ENCODE measurements at regions of chr2 and their contacts with region 1.

Region 1: GRCh38 chr2:224802407-224802806 is 86.2 kb upstream of the CCDC195 start:
- DNase-seq: no peak
- ATAC-seq: no peak
- H3K4me3 ChIP-seq: no peak overlapping the region
- H3K4me3 Mint-ChIP-seq: no peak overlapping the region
- H3K27ac ChIP-seq: no peak overlapping the region
- H3K27ac Mint-ChIP-seq: peak overlapping the region in 4 of 9 donors; percentile 12 to 79 (median 26)
- H3K4me1 ChIP-seq: no peaks in the 10 kb centered on the region
- H3K4me1 Mint-ChIP-seq: peaks cover 0 to 4% (median 0%) of the 10 kb centered on the region in 7 donors
- H3K27me3 ChIP-seq: no peaks in the 10 kb centered on the region
- H3K27me3 Mint-ChIP-seq: no peaks in the 10 kb centered on the region

Region 2: DNA sequence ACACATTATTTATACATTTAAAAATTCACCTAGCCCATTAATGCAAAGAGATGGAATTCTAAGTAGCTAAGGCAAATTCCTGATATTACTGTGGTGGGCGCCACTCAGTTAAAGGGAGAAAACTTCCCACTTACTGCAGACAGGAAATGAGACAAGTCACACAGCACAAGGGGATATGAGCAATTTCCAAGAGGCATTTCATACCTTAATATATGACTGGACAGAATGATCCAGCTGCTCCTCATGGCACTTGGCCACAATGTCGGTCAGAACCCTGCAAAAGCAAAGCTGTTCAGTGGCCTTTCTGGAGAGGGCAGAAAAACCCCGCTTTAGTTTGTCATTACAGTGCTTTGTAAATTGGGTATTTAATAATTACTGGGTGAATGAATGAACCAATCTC is 35.2 kb after region 1 on chr2:
- CTCF ChIA-PET with region 1: no interaction called
- POLR2A ChIA-PET with region 1: interaction called, 3 read pairs
- intact Hi-C with region 1: loop called (anchors 5 kb)
- DNase-seq: no peak
- ATAC-seq: no peak
- H3K4me3 ChIP-seq: no peak overlapping the region
- H3K4me3 Mint-ChIP-seq: no peak overlapping the region
- H3K27ac ChIP-seq: no peak overlapping the region
- H3K27ac Mint-ChIP-seq: peak overlapping the region in 5 of 9 donors; percentile 45 to 61 (median 51)
- H3K4me1 ChIP-seq: no peaks in the 10 kb centered on the region
- H3K4me1 Mint-ChIP-seq: peaks cover 0 to 13% (median 4%) of the 10 kb centered on the region in 7 donors
- H3K27me3 ChIP-seq: no peaks in the 10 kb centered on the region
- H3K27me3 Mint-ChIP-seq: no peaks in the 10 kb centered on the region

Region 3: GRCh38 chr2:224847961-224848850 is 45.8 kb after region 1 on chr2:
- CTCF ChIA-PET with region 1: no interaction called
- POLR2A ChIA-PET with region 1: no interaction called
- intact Hi-C with region 1: loop called in 1 of 2 experiments (anchors 5 kb)
- DNase-seq: no peak
- ATAC-seq: no peak
- H3K4me3 ChIP-seq: no peak overlapping the region
- H3K4me3 Mint-ChIP-seq: no peak overlapping the region
- H3K27ac ChIP-seq: no peak overlapping the region
- H3K27ac Mint-ChIP-seq: peak overlapping the region in 4 of 9 donors; percentile 25 to 75 (median 62)
- H3K4me1 ChIP-seq: no peaks in the 10 kb centered on the region
- H3K4me1 Mint-ChIP-seq: peaks cover 0 to 14% (median 0%) of the 10 kb centered on the region in 7 donors
- H3K27me3 ChIP-seq: no peaks in the 10 kb centered on the region
- H3K27me3 Mint-ChIP-seq: no peaks in the 10 kb centered on the region

Region 4: DNA sequence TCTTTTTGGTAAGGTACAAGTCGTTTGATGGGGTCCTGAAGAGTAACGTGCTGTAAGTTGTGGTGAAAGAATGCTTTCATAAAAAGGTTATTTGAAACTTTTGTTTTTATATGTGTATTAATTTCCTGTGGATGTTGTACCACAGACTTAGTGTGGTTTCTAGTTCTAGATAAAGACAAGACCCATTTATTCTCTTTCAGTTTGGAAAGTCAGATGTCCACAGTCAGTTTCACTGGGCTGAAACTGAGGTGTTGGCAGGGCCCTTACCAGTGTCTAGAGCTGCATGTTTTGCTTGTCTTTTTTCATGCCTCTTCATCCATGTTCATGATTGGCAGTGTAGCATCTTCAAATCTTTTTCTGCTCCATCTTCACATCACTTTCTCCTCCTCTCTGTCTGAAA is 262.0 kb after region 1 on chr2:
- CTCF ChIA-PET with region 1: no interaction called
- POLR2A ChIA-PET with region 1: no interaction called
- intact Hi-C with region 1: no loop called
- DNase-seq: no peak
- ATAC-seq: peak; percentile 24
- H3K4me3 ChIP-seq: no peak overlapping the region
- H3K4me3 Mint-ChIP-seq: peak overlapping the region; percentile 6 to 62 (median 40)
- H3K27ac ChIP-seq: no peak overlapping the region
- H3K27ac Mint-ChIP-seq: peak overlapping the region in 8 of 9 donors; percentile 26 to 80 (median 61)
- H3K4me1 ChIP-seq: peaks cover 10 to 14% of the 10 kb centered on the region in 2 donors
- H3K4me1 Mint-ChIP-seq: peaks cover 11 to 42% (median 35%) of the 10 kb centered on the region in 7 donors
- H3K27me3 ChIP-seq: no peaks in the 10 kb centered on the region
- H3K27me3 Mint-ChIP-seq: no peaks in the 10 kb centered on the region

Region 5: DNA sequence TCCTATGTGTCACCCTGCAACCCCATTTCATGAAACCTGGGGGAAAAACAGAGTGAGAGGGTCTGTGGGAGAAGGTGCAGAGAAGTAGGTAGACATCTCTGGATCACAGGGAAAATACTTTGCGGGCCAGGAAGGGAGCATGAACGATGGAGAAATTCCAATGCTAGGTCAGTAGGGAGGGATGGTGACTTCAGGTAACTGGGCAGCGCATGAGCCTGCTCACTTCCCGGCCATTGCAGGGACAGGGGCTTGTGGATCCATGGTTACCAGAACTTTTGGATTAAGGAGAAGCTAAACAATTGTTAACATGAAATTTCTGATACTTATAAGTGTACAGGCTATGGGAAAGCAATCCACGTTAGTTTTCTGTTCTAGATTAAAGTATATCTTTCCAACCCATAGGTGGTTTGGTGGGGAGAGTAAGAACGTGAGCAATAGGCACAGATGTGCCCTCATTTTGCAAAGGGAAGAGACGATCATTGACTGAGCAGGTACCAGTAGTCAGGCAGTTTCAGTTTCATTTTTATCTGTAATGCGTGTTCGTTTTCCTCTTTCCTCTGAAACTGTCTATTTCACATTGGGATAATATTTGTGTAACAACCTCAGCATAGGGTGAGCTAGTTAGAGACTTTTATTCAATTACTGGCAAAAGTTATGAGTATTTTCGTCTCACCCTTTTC is 662.1 kb after region 1 on chr2:
- CTCF ChIA-PET with region 1: no interaction called
- POLR2A ChIA-PET with region 1: no interaction called
- intact Hi-C with region 1: no loop called
- DNase-seq: peak in 6 of 9 donors; percentile 16 to 48 (median 38)
- ATAC-seq: peak; percentile 67
- H3K4me3 ChIP-seq: peak overlapping the region; percentile 40
- H3K4me3 Mint-ChIP-seq: peak overlapping the region; percentile 81 to 93 (median 86)
- H3K27ac ChIP-seq: no peak overlapping the region
- H3K27ac Mint-ChIP-seq: peak overlapping the region; percentile 76 to 96 (median 86)
- H3K4me1 ChIP-seq: peaks cover 7 to 8% of the 10 kb centered on the region in 2 donors
- H3K4me1 Mint-ChIP-seq: peaks cover 11 to 40% (median 22%) of the 10 kb centered on the region in 7 donors
- H3K27me3 ChIP-seq: no peaks in the 10 kb centered on the region
- H3K27me3 Mint-ChIP-seq: peaks cover 0 to 6% (median 0%) of the 10 kb centered on the region in 5 donors

Measured in naive thymus-derived CD4-positive, alpha-beta T cell (primary cell).